ENCODE measurements at regions of chr20 and their contacts with region 1.

Region 1: DNA sequence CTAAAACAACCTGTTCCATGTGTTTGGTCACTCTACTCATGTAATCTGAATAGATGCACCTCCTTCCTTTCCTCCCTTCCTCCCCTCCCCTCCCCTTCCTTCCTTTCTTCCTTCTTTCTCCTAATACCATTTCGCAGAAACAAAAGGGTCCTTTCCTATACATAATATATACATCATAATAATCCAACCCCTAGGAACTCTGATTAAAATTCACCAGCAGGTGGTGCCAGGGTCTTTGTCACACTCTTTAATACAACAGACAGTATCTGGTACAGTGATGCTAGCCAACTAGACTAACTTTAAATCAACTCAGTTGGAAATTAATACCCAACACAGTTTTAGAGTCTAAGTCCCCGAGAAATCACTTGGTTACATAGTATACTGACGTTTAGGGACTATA is 181.2 kb upstream of the SHLD1 start:
- DNase-seq: peak; percentile 70
- H3K4me3 Mint-ChIP-seq: no peak overlapping the region
- H3K27ac Mint-ChIP-seq: peak overlapping the region; percentile 68
- H3K4me1 Mint-ChIP-seq: peaks cover 41% of the 10 kb centered on the region
- H3K27me3 Mint-ChIP-seq: no peaks in the 10 kb centered on the region

Region 2: GRCh38 chr20:5557123-5557522 is 11.9 kb before region 1 on chr20:
- CTCF ChIA-PET with region 1: interaction called, 17 read pairs
- DNase-seq: peak; percentile 75
- H3K4me3 Mint-ChIP-seq: no peak overlapping the region
- H3K27ac Mint-ChIP-seq: no peak overlapping the region
- H3K4me1 Mint-ChIP-seq: peaks cover 1% of the 10 kb centered on the region
- H3K27me3 Mint-ChIP-seq: no peaks in the 10 kb centered on the region

Region 3: DNA sequence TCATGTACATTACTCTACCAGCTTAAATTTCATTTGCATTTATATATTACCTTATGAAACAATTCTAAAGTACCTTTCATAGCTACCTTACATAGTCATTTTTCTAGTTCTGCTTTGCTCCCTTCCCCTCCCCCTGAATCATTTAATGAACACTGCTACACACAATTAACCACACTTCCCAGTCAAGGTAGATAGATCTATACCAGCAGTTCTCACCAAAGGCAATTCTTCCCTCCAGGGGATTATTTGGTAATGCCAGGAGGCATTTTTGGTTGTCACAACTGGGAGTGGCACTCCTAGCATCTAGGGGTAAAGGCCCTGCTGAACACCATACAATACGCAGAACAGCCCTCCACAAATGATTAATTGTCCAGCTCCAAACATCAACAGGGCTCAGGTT is 37.3 kb after region 1 on chr20:
- CTCF ChIA-PET with region 1: interaction called, 11 read pairs
- DNase-seq: no peak
- H3K4me3 Mint-ChIP-seq: no peak overlapping the region
- H3K27ac Mint-ChIP-seq: peak overlapping the region; percentile 6
- H3K4me1 Mint-ChIP-seq: peaks cover 69% of the 10 kb centered on the region
- H3K27me3 Mint-ChIP-seq: no peaks in the 10 kb centered on the region

Region 4: GRCh38 chr20:5788385-5788895 is 219.4 kb after region 1 on chr20:
- CTCF ChIA-PET with region 1: interaction called, 95 read pairs
- DNase-seq: peak; percentile 85
- H3K4me3 Mint-ChIP-seq: no peak overlapping the region
- H3K27ac Mint-ChIP-seq: peak overlapping the region; percentile 13
- H3K4me1 Mint-ChIP-seq: peaks cover 2% of the 10 kb centered on the region
- H3K27me3 Mint-ChIP-seq: no peaks in the 10 kb centered on the region

Measured in activated naive CD4-positive, alpha-beta T cell treated with anti-CD3 and anti-CD28 coated beads, Interleukin-2, amount 10 ng/mL, durations not matched to agents 7 days and 5 days (primary cell).